Heart left ventricle (tissue), 16 donors: ENCODE measurements at regions of chr10 and their contacts with region 1.

Region 1: DNA sequence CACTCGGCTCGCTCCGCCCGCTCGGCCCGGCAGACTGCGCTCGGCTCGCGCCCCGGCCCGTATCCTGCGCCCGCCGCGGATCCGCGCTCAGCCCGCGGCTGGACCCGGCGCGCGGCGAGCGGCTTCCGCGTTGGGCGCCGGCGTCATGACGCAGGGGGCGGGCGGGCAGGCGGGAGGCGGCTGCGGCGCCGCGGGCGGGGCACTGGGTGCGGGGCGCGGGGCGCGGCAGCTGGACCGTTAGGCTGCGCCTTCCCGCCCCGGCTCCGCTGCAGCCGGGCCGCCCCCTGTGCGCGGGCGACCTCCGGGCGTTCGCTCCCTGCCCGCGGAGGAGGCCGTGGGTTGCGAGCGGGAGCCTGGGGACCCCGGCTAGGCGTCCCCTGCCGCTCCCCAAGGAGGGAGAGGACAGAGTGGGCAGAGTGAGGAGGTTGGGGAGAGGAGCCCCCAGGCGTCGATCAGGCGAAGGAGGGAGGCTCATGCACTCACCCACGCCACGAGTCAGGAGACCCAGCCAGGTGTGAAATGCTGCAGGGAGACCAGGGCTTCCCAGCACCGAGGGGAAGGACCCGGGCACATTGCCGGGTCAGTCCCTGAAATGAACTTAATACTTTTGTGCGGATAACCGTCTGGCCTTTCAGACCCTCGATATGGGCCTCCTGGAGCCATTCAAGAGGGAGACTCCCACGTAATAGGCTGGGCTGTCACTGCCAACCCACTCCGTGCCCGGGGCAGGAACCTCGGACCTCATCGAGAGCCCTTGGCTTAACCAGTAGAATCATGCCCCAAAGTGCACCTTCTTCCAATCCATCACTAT is at the start of gene PIP4K2A:
- DNase-seq: peak; percentile 75 to 91 (median 85)
- ATAC-seq: peak; percentile 69 to 93 (median 88)
- H3K4me3 ChIP-seq: peak within 1 kb of the TSS; percentile 75 to 98 (median 95)
- H3K27ac ChIP-seq: peak within 1 kb of the TSS; percentile 72 to 93 (median 82)
- H3K4me1 ChIP-seq: peaks cover 0 to 34% (median 21%) of the 10 kb centered on the region in 12 donors
- H3K27me3 ChIP-seq: no peaks in the 10 kb centered on the region
- CTCF ChIP-seq: no peak
- POLR2A ChIP-seq: peak in 1 of 2 donors; percentile 47
- total RNA-seq, gene PIP4K2A: 9.2 to 35.6 (median 13.7) TPM

Region 2: GRCh38 chr10:22325272-22326144 is 389.2 kb before region 1 on chr10:
- intact Hi-C with region 1: loop called in 1 of 10 experiments (anchors 10 kb)
- DNase-seq: peak; percentile 80 to 89 (median 85)
- ATAC-seq: peak in 3 of 4 donors; percentile 54 to 67 (median 55)
- H3K4me3 ChIP-seq: peak overlapping the region; percentile 28 to 76 (median 62)
- H3K27ac ChIP-seq: peak overlapping the region in 11 of 12 donors; percentile 48 to 77 (median 65)
- H3K4me1 ChIP-seq: peaks cover 0 to 42% (median 31%) of the 10 kb centered on the region in 12 donors
- H3K27me3 ChIP-seq: peaks cover 0 to 29% (median 0%) of the 10 kb centered on the region in 9 donors
- CTCF ChIP-seq: no peak
- POLR2A ChIP-seq: no peak

Region 3: DNA sequence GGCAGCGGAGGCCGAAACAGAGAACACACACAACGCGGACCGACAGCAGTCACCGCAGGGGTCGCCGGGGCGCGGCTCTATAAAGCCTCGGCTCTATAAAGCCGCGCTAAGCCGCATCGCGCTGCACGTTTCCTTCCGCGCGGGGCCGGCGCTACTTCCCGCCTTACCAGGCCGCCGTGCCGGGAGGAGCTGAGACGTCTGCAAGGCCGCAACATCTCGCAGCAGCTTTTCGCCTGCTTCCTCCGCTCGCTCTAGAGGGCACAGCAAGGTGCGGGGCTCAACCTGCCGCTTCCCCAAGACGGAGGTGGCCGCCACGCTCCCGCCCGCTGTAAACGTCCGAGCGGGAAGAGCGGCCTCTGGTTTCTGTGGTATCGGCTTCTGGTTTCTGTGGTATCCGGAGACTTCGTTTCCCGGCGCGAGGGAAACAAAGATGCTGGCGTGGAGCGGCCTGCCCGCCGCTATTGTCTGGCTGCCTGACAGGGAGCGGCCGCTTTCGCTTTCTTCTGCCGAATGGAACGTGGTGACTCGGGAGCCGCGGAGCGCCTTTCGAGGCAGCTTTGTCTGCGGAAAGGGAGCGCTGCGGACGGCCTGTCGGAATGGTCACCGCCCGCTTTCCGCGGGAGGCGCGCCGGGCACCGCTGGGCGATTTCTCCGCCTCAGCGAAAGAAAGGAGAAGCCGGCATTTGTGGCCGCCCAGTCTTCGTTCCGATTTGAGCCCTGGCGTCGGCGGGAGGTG is 277.6 kb before region 1 on chr10:
- intact Hi-C with region 1: loop called in 1 of 10 experiments (anchors 10 kb)
- DNase-seq: peak; percentile 90 to 96 (median 93)
- ATAC-seq: peak; percentile 89 to 97 (median 97)
- H3K4me3 ChIP-seq: peak overlapping the region; percentile 54 to 88 (median 76)
- H3K27ac ChIP-seq: peak overlapping the region; percentile 78 to 98 (median 95)
- H3K4me1 ChIP-seq: peaks cover 0 to 30% (median 15%) of the 10 kb centered on the region in 12 donors
- H3K27me3 ChIP-seq: peaks cover 0 to 3% (median 0%) of the 10 kb centered on the region in 9 donors
- CTCF ChIP-seq: peak in 8 of 12 donors; percentile 5 to 50 (median 27)
- POLR2A ChIP-seq: peak in 1 of 2 donors; percentile 78

Region 4: GRCh38 chr10:22615819-22616499 is 98.7 kb before region 1 on chr10:
- intact Hi-C with region 1: loop called in 8 of 10 experiments (anchors 5 to 10 kb)
- DNase-seq: peak in 4 of 5 donors; percentile 35 to 68 (median 53)
- ATAC-seq: peak in 3 of 4 donors; percentile 36 to 49 (median 41)
- H3K4me3 ChIP-seq: peak overlapping the region in 2 of 12 donors; percentile 18 to 40
- H3K27ac ChIP-seq: peak overlapping the region in 9 of 12 donors; percentile 10 to 85 (median 14)
- H3K4me1 ChIP-seq: peaks cover 2 to 98% (median 50%) of the 10 kb centered on the region in 12 donors
- H3K27me3 ChIP-seq: no peaks in the 10 kb centered on the region
- CTCF ChIP-seq: no peak
- POLR2A ChIP-seq: no peak

Region 5: DNA sequence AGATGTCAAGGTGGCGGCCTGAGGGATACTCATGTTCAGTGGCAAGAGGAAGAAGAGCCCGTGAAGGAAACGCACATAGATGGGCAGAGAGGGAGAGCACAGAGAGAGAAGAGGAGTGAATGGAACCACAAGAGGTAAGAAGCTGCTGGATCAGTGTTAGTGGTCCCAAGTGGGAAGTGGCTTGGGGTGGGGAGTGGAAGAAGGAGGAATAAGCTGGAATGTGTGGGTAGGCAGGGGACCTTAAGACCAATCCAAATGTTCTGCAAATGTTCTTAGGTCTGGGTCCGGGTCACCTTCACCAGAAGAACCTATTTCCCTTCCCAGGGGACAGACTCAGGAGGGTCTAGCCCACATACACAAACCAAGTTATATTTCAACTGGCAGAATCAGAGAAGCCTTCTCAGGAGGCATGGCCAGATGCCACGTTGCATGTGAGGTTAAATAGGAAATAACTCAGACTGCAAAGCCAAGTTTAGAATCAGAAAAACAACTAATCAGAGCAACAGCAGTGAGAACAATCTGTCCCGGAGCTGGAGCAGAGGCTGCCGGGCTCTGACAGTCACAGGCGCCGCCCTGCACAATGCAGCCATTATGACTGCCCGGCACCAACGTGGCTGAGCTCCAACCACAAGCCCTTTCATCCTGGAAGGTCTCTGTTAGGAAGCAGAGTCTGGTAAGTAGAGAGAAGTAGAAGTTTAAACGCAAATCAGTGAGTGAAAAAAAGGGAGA is 134.6 kb after region 1 on chr10:
- intact Hi-C with region 1: loop called in 3 of 10 experiments (anchors 5 to 10 kb)
- DNase-seq: peak; percentile 69 to 92 (median 87)
- ATAC-seq: peak; percentile 98 to 99 (median 99)
- H3K4me3 ChIP-seq: peak overlapping the region in 8 of 12 donors; percentile 6 to 34 (median 22)
- H3K27ac ChIP-seq: peak overlapping the region; percentile 67 to 88 (median 81)
- H3K4me1 ChIP-seq: peaks cover 0 to 33% (median 20%) of the 10 kb centered on the region in 12 donors
- H3K27me3 ChIP-seq: no peaks in the 10 kb centered on the region
- CTCF ChIP-seq: no peak
- POLR2A ChIP-seq: no peak

Region 6: DNA sequence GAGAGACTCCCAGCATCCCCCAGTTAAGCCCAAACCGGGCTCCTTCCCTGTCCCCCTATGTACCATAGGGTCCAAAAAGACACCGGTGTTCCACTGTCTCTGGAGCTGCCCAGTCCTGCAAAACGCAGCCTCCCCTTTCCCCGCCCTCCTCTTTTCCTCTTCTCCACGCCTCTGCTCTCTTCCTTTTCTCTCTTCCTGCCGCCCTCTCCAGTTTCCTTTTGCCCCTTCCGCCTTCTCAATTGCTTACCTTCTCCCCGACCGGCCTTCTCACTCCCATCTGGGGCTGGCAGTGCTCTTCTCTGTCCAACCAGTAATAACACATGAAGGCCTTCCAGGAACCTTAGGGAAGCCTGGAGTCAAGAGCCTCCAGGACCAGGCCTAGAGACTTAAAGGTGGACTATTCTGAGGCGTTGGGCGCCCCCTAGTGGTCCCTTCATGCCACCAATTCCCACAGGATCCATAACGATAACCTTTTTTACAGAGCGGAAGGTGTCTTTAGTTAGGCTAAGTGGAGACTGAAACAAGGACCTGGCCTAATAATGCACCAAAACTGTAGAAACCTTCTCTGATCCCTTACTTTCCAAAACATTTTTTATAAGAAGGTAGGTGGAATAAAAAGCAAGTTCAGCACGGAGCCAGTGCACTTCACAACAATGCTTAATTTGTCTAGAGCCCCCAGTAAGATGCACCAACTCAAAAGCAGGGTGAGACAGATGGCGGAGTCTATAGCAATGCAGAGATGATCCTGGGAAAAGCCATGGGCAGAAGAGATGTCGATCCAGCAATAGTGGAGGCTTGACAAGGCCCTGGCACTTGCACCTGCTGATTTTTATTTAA is 353.5 kb after region 1 on chr10:
- intact Hi-C with region 1: loop called in 1 of 10 experiments (anchors 5 kb)
- DNase-seq: peak; percentile 59 to 83 (median 66)
- ATAC-seq: peak; percentile 25 to 73 (median 68)
- H3K4me3 ChIP-seq: no peak overlapping the region
- H3K27ac ChIP-seq: no peak overlapping the region
- H3K4me1 ChIP-seq: peaks cover 0 to 23% (median 10%) of the 10 kb centered on the region in 12 donors
- H3K27me3 ChIP-seq: no peaks in the 10 kb centered on the region
- CTCF ChIP-seq: peak; percentile 70 to 90 (median 82)
- POLR2A ChIP-seq: no peak

Region 7: DNA sequence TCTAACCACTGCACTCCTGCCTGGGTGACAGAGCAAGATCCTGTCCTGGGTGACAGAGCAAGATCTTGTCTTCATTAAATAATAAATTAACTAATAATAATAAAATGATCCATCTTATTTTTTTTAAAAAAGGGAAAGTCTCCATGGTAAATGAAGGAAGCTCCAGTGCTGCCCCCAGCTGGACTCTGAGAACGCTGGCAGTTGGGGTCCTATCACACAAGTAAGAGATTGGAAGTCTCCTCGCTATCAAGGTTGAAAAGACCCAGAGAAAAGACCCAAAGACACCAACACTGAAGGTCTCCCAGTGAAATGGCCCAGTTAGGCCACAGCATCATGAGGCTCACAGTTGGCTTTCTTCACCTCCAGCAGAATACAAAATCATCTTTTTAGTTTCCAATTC is 643.7 kb after region 1 on chr10:
- intact Hi-C with region 1: no loop called
- DNase-seq: no peak
- ATAC-seq: no peak
- H3K4me3 ChIP-seq: no peak overlapping the region
- H3K27ac ChIP-seq: no peak overlapping the region
- H3K4me1 ChIP-seq: peaks cover 0 to 7% (median 0%) of the 10 kb centered on the region in 12 donors
- H3K27me3 ChIP-seq: no peaks in the 10 kb centered on the region
- CTCF ChIP-seq: peak in 2 of 12 donors; percentile 18 to 28
- POLR2A ChIP-seq: no peak